ENCODE measurements at regions of chr5 and their contacts with region 1.

Region 1: GRCh38 chr5:154811653-154812365 is 38.6 kb downstream of the FAXDC2 start:
- DNase-seq: peak; percentile 55 to 80
- ATAC-seq: peak; percentile 63 to 86 (median 78)
- H3K4me3 ChIP-seq: no peak overlapping the region
- H3K27ac ChIP-seq: no peak overlapping the region
- H3K4me1 ChIP-seq: no peaks in the 10 kb centered on the region
- H3K27me3 ChIP-seq: no peaks in the 10 kb centered on the region
- CTCF ChIP-seq: peak; percentile 90

Region 2: DNA sequence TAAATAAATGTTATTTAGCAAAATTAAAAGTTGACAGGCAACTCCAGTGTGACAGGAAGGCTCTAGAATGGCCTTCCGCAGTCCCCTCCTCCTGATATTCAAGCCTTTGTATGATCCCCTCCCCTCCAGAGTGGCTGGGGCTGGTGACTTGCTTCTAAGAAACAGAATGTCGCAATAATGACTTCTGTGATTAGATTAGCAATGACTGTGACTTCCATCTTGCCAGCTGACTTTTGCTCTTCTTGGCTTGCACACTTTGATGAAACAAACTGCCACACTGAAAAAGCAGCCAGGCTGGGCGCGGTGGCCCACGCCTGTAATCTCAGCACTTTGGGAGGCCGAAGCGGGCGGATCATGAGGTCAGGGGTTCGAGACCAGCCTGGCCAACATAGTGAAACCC is 163.1 kb before region 1 on chr5:
- intact Hi-C with region 1: loop called (anchors 1 to 2 kb)
- DNase-seq: no peak
- ATAC-seq: peak; percentile 64 to 79 (median 72)
- H3K4me3 ChIP-seq: no peak overlapping the region
- H3K27ac ChIP-seq: peak overlapping the region; percentile 4
- H3K4me1 ChIP-seq: peaks cover 10% of the 10 kb centered on the region
- H3K27me3 ChIP-seq: no peaks in the 10 kb centered on the region
- CTCF ChIP-seq: no peak

Measured in psoas muscle (tissue), 8 donors.